ENCODE measurements at regions of chr10 and their contacts with region 1.

Region 1: GRCh38 chr10:22988581-22989360 is 60.9 kb downstream of the ARMC3 start:
- DNase-seq: peak in 1 of 3 donors; percentile 61
- ATAC-seq: peak; percentile 79 to 87 (median 84)
- H3K4me3 ChIP-seq: no peak overlapping the region
- H3K27ac ChIP-seq: no peak overlapping the region
- H3K4me1 ChIP-seq: peaks cover 0 to 7% (median 3%) of the 10 kb centered on the region in 4 donors
- H3K27me3 ChIP-seq: no peaks in the 10 kb centered on the region
- CTCF ChIP-seq: peak; percentile 94 to 97 (median 96)
- POLR2A ChIP-seq: no peak

Region 2: DNA sequence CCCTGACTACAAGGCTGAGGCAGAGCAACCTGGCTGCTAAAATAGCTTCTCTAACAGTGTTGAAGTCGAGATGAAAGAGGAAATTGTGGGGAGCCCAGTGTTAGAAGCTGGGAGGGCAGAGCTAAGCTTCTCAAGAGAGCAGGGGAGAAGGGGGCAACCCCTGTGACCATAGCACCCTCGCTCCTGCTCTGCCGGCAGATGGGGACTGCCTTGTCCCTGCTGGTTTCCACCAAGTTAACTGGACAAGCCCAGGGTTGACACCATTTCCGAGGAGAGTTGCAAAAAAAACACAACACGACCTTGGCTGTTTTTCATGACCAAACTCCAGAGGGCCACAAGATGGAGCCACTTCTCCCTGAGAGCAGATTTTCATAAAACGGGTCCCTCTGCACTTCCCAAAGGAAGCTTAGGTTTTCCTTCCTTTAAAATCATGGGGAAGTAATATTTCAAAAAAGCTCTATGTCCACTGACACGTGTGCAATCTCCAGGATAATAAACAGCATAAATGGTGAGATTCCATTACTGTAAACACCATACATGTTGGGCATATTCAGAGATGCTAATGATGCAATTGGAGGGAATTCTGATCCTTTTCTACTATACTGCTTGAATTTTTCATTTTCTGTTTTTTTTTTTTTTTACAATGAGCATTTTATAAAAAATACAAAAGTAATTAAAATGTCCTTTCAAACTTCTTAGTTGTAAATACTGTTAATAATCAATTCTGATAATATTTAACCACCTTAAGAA is 414.8 kb before region 1 on chr10:
- intact Hi-C with region 1: loop called in 1 of 2 experiments (anchors 10 kb)
- DNase-seq: no peak
- ATAC-seq: peak; percentile 71 to 77 (median 74)
- H3K4me3 ChIP-seq: no peak overlapping the region
- H3K27ac ChIP-seq: no peak overlapping the region
- H3K4me1 ChIP-seq: peaks cover 0 to 5% (median 0%) of the 10 kb centered on the region in 4 donors
- H3K27me3 ChIP-seq: no peaks in the 10 kb centered on the region
- CTCF ChIP-seq: peak; percentile 42 to 66 (median 56)
- POLR2A ChIP-seq: no peak

Region 3: GRCh38 chr10:23981520-23982309 is 992.9 kb after region 1 on chr10:
- intact Hi-C with region 1: no loop called
- DNase-seq: no peak
- ATAC-seq: no peak
- H3K4me3 ChIP-seq: no peak overlapping the region
- H3K27ac ChIP-seq: no peak overlapping the region
- H3K4me1 ChIP-seq: no peaks in the 10 kb centered on the region
- H3K27me3 ChIP-seq: no peaks in the 10 kb centered on the region
- CTCF ChIP-seq: no peak
- POLR2A ChIP-seq: no peak

Measured in right lobe of liver (tissue), 6 donors.